A549 (cell line): ENCODE measurements at regions of chr14 and their contacts with region 1.

Region 1: GRCh38 chr14:23186913-23187654 is 3.6 kb upstream of the SLC7A8 start:
- DNase-seq: peak; percentile 64 to 74
- ATAC-seq: peak; percentile 63 to 83; a peak in 5 of 6 replicates
- H3K4me3 ChIP-seq: no peak overlapping the region
- H3K27ac ChIP-seq: no peak overlapping the region
- H3K4me1 ChIP-seq: 0 out of 3 replicates have a peak, but pooled peaks cover 3% of the 10 kb centered on the region
- CTCF ChIP-seq: peak; percentile 93
- EP300 ChIP-seq: no peak
- POLR2A ChIP-seq: no peak
- RAD21 ChIP-seq: peak; percentile 92 to 96

Region 2: DNA sequence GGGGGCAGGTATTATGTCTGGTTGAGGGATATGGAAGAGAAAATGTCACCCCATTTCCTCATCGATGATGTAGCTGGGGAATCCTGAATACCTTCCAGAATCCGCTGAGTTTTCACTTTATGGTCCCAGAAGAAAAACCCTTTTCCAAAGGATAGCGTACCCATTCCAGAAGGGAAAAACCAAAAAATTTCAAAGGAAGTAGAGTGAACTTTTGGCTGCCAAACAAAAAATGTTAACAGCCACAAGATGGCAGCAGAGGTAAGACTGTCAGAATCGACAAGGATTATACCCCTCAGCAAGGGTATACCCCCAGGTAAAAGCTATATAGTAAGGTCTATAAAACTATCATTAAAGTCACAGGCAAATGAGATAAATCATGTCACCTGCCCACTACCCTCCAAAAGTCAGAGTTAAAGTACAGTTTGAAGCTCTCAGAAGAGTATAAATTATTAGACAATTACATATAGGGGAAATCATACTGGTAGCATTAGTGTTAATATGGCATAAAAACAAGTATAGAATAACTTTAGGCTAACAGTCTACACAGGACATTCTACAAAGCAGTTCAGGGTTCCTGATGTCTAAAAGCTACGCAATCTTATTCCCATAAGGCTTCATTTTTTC is 110.2 kb before region 1 on chr14:
- CTCF ChIA-PET with region 1: interaction called, 22 read pairs
- POLR2A ChIA-PET with region 1: no interaction called
- DNase-seq: peak in 1 of 2 experiments; percentile 33
- ATAC-seq: peak; percentile 51 to 55; a peak in 3 of 6 replicates
- H3K4me3 ChIP-seq: no peak overlapping the region
- H3K27ac ChIP-seq: no peak overlapping the region; a peak in 1 of 6 replicates
- H3K4me1 ChIP-seq: peaks cover 49% of the 10 kb centered on the region
- CTCF ChIP-seq: peak; percentile 80
- EP300 ChIP-seq: no peak
- POLR2A ChIP-seq: no peak
- RAD21 ChIP-seq: peak; percentile 48 to 56; a peak in 4 of 5 replicates

Region 3: DNA sequence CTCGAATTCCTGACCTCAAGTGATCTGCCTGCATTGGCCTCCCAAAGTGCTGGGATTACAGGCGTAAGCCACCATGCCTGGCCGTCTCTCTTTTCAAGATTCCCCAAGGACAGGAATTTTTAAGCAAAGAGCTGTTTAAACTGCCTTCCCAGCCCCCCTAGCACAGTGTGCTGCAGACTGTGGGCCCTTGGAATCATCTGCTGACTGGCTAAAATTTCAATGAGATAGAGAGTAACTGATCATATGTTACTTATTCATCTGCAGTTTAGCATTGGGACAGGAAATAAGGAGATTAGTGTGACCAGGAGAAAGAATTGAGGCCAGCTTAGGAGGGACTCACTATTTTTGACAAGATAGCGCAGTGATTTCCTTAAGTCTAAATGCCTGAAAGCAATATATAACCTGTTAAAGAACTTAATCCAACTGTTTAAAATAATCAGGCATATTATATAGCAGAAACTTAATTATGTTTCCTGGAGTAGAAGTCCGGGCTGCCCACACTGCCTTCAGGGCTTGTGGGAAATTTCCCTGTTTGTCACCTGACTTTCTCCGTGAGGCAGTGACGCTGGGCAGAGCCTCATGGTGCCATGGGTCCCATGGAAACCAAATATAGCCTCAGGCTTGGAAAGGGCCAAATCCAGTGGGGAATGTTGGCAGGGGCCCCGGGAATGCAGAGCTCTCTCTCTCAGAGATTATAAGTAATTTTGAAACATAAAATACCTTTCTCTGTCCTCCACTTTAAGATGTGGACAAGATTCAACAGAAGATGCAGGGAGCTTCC is 45.2 kb before region 1 on chr14:
- CTCF ChIA-PET with region 1: interaction called, 75 read pairs
- POLR2A ChIA-PET with region 1: no interaction called
- DNase-seq: peak; percentile 34 to 53
- ATAC-seq: peak; percentile 62 to 70; a peak in 5 of 6 replicates
- H3K4me3 ChIP-seq: no peak overlapping the region
- H3K27ac ChIP-seq: peak overlapping the region in 1 of 2 experiments; percentile 49; a peak in 2 of 6 replicates
- H3K4me1 ChIP-seq: peaks cover 25% of the 10 kb centered on the region
- CTCF ChIP-seq: no peak
- EP300 ChIP-seq: no peak
- POLR2A ChIP-seq: no peak
- RAD21 ChIP-seq: no peak

Region 4: GRCh38 chr14:23154964-23155587 is 32.0 kb before region 1 on chr14:
- CTCF ChIA-PET with region 1: interaction called, 75 read pairs
- POLR2A ChIA-PET with region 1: no interaction called
- DNase-seq: peak in 1 of 2 experiments; percentile 41
- ATAC-seq: peak; percentile 61 to 83
- H3K4me3 ChIP-seq: no peak overlapping the region
- H3K27ac ChIP-seq: peak overlapping the region; percentile 2 to 42; a peak in 5 of 6 replicates
- H3K4me1 ChIP-seq: peaks cover 5% of the 10 kb centered on the region; the same call in 1 of the 3 replicates
- CTCF ChIP-seq: no peak
- EP300 ChIP-seq: no peak
- POLR2A ChIP-seq: no peak
- RAD21 ChIP-seq: no peak

Region 5: DNA sequence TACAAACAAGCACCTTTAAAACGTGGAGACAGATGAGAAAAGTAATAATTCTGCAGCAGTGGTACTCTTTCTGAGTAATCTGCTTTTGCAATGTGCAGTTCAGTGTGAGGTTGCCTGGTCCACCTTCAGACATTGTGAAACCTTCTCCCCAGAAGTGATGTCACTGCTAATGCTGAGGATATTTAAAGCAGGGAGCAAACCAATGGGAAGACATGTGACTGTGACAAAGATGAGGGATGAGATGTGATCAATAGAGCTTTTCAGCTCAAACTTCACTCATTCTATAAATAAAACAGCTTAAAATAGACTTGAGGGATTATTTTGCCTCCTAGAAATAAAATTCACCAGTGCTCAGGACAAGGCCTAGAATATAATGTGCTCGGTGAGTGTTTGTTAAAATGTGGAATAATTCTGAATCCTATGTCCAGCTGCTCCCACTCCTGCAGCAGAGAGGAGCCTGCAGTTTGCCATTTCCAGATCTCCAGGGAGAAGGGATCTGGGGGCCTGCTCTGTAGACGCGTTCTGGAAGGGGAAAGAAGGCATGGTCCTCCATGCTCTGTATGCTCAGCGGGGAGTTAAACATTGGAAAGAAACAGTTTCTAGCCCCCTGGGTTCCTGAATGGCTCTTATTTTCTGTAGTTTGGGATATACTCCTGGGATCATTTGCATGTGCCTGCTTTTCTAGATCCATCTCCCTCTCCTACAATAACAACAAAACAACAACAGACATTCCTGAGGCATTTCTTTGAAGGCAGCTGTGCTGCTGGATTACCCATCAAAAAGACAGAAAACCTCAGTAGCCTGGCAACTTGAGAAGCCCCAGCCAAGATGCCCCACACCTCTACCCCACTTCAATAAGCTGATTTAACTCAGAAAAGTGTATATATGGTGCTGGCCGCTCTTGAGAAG is 12.6 kb before region 1 on chr14:
- CTCF ChIA-PET with region 1: interaction called, 111 read pairs
- POLR2A ChIA-PET with region 1: no interaction called
- DNase-seq: no peak
- ATAC-seq: no peak; a peak in 1 of 6 replicates
- H3K4me3 ChIP-seq: no peak overlapping the region
- H3K27ac ChIP-seq: no peak overlapping the region
- H3K4me1 ChIP-seq: 0 out of 3 replicates have a peak, but pooled peaks cover 7% of the 10 kb centered on the region
- CTCF ChIP-seq: no peak
- EP300 ChIP-seq: no peak
- POLR2A ChIP-seq: no peak
- RAD21 ChIP-seq: no peak

Region 6: DNA sequence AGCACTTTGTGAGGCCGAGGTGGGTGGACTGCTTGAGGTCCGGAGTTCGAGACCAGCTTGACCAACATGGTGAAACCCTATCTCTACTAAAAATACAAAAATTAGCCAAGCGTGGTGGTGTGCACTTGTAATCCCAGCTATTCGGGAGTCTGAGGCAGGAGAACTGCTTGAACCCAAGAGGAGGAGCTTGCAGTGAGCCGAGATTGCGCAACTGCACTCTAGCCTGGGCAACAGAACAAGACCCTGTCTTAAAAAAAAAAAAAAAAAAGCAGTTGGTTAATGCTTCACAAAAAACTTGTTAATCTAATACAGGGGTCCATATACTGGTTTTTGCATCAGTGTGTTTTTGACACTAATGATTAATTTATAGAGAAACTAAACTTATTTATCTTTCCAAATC is 14.9 kb after region 1 on chr14:
- CTCF ChIA-PET with region 1: interaction called, 16 read pairs
- POLR2A ChIA-PET with region 1: no interaction called
- DNase-seq: no peak
- ATAC-seq: no peak
- H3K4me3 ChIP-seq: no peak overlapping the region
- H3K27ac ChIP-seq: no peak overlapping the region
- H3K4me1 ChIP-seq: no peaks in the 10 kb centered on the region
- CTCF ChIP-seq: no peak
- EP300 ChIP-seq: no peak
- POLR2A ChIP-seq: no peak
- RAD21 ChIP-seq: no peak

Region 7: GRCh38 chr14:24114536-24115450 is 927.7 kb after region 1 on chr14 and contains the starts of genes DCAF11 and NRL:
- CTCF ChIA-PET with region 1: no interaction called
- POLR2A ChIA-PET with region 1: no interaction called
- DNase-seq: peak; percentile 99 to 100
- ATAC-seq: peak; percentile 92 to 94
- H3K4me3 ChIP-seq: peak within 1 kb of the TSS; percentile 62
- H3K27ac ChIP-seq: peak within 1 kb of the TSS; percentile 95 to 96
- H3K4me1 ChIP-seq: peaks cover 11% of the 10 kb centered on the region; the same call in 1 of the 3 replicates
- CTCF ChIP-seq: no peak
- EP300 ChIP-seq: no peak
- POLR2A ChIP-seq: 0 out of 2 replicates have a peak, but pooled peaks have one; percentile 3
- RAD21 ChIP-seq: no peak
- polyA plus RNA-seq, gene DCAF11: 27.9 and 30.2 TPM in 2 replicates
- polyA plus RNA-seq, gene NRL: 0.86 and 0.97 TPM in 2 replicates